HEK293T (cell line): ENCODE measurements at regions of chr17 and their contacts with region 1.

Region 1: DNA sequence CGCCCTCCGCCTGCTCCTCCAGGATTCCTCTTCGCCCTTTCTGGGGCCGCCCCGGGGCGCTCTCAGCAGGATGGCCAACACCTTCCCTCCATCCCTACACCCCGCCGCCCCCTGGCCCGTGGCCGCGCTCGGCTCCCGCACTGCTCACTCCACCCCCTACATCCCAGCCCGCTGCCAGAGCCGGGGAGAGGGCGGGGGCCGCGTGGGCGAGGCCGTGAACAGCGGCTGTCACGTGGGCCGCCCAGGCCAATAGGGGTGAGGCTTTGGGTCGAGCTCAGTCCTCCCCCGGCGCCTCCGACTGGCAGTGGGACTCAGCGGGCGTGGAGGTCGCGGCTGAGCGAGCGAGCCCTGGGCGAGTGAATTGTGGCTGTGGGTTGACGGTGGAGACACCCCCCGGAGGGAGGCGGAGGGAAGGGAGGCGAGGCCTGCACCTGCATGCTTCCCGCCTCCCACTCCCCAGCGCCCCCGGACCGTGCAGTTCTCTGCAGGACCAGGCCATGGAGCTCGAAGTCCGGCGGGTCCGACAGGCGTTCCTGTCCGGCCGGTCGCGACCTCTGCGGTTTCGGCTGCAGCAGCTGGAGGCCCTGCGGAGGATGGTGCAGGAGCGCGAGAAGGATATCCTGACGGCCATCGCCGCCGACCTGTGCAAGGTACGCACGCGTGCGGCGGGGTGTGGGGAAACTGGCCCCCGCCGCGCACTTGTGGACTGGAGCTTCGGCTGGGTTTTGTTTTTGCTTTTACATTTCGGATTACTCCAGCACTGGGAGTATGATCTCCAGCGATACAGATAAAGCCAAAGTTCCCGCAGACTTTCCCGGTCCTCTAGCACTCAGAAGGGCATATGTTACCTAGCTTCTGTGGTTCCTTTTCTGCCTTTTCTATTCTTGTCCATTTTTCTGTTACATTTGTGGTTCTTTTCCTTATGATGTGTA is at the start of gene ALDH3A2:
- DNase-seq: peak; percentile 96

Region 2: GRCh38 chr17:19513897-19514488 is 134.7 kb before region 1 on chr17:
- CTCF ChIA-PET with region 1: interaction called, 4 read pairs
- POLR2A ChIA-PET with region 1: interaction called, 28 read pairs
- DNase-seq: peak; percentile 63

Region 3: DNA sequence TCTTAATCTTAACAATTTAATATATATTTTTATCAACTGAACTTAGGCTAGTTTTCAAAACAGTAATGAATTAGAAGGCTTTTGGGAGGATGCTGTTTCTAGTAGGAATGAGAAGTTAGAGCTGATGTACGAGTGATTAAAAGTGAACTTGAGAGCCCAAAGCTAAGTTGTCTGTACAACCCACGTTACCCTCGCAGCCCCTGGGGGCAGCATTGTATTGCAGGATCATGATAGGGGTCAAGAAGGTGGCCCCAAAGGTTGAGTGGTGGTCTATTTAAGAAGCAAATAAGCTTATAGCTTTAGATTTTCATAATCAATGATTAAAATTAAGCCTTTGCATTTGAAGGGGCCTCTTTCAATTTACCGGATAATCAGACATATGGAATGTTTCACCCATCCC is 33.8 kb before region 1 on chr17:
- CTCF ChIA-PET with region 1: interaction called, 4 read pairs
- POLR2A ChIA-PET with region 1: interaction called, 14 read pairs
- DNase-seq: no peak

Region 4: DNA sequence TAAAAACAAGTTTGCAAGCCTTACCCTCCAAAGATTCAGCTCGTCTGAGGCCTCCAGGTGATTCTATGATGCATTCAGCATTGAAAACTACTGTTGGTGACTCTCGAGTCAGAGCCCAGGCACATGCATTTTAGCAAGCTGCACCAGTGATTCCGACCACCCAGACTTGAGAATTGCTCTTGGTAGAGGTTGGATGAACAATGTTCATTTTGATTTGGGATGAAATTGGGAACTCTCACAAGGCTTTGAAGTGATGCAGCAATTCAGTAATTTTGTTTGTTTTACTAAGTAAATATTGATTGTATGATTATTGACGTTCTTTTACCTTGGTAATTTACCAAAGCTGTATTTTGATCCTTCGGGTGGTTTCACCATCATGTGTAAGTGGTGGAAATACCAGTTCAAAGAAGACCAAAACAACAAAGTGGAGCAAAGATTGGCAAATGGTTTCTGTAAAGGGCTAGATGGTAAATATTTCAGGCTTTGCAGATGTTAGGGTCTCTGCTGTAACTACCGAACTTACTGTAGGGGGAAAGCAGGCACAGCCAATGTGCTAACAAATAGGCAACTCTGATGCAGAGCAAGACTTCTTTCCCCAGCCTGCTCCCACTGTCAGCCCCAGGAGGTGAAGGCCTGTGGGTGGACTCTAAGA is 11.6 kb after region 1 on chr17:
- CTCF ChIA-PET with region 1: interaction called, 3 read pairs
- POLR2A ChIA-PET with region 1: interaction called, 34 read pairs
- DNase-seq: no peak

Region 5: GRCh38 chr17:19708431-19709175 is 59.9 kb after region 1 on chr17:
- CTCF ChIA-PET with region 1: no interaction called
- POLR2A ChIA-PET with region 1: interaction called, 10 read pairs
- DNase-seq: no peak

Region 6: GRCh38 chr17:19728079-19728495 is 79.3 kb after region 1 on chr17:
- CTCF ChIA-PET with region 1: no interaction called
- POLR2A ChIA-PET with region 1: interaction called, 15 read pairs
- DNase-seq: no peak

Region 7: DNA sequence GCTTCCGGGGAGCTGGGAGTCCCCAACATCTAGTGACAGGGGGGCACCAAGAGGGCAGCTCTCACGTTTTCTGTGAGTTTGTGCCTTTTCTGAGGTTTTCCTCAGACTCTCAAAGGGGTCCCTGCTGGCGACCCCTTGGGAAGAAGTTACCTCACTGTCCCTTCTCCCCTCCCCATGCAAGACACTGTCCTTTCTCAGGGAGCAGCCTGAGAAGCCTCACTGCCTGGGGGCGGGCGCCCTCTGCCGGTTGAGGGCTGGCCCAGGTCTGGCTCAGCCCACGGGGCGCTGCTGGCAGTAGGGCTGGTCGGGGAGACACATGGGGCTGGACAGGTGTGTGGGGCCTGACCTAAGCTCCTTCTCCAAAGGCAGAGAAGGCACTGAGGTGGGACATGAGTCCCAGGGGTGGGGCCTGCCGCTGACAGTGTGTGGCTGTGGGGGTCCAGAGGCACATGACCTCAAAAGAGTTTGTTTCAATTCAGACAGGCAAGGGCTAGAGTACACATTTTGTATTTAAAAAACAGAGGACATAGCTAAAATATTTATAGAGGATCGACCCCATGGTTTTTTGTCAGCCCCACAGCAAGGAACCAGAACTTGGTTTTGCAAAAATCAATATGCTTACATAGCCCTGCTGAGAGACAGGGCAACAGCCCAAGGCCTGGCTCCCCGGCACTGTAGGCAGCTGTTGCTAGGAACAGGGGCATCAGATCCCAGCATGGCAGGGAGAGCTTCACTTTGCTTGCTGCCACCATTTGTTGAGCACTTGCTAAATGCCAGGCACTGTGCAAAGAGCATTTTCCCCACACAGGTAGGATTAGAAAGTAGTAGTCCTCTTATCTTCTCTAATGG is 117.9 kb after region 1 on chr17:
- CTCF ChIA-PET with region 1: interaction called, 22 read pairs
- POLR2A ChIA-PET with region 1: interaction called, 26 read pairs
- DNase-seq: peak; percentile 83